Psoas muscle (tissue), 8 donors: ENCODE measurements at regions of chr5 and their contacts with region 1.

Region 1: GRCh38 chr5:116574367-116575325 is at the start of gene SEMA6A:
- DNase-seq: peak; percentile 88 to 94
- ATAC-seq: peak; percentile 89 to 92 (median 90)
- H3K4me3 ChIP-seq: peak within 1 kb of the TSS; percentile 73
- H3K27ac ChIP-seq: peak within 1 kb of the TSS; percentile 63
- H3K4me1 ChIP-seq: peaks cover 11% of the 10 kb centered on the region
- H3K27me3 ChIP-seq: peaks cover 0 to 31% (median 14%) of the 10 kb centered on the region in 3 donors
- CTCF ChIP-seq: no peak
- total RNA-seq, gene SEMA6A: 3.1 to 7.6 (median 4.3) TPM

Region 2: DNA sequence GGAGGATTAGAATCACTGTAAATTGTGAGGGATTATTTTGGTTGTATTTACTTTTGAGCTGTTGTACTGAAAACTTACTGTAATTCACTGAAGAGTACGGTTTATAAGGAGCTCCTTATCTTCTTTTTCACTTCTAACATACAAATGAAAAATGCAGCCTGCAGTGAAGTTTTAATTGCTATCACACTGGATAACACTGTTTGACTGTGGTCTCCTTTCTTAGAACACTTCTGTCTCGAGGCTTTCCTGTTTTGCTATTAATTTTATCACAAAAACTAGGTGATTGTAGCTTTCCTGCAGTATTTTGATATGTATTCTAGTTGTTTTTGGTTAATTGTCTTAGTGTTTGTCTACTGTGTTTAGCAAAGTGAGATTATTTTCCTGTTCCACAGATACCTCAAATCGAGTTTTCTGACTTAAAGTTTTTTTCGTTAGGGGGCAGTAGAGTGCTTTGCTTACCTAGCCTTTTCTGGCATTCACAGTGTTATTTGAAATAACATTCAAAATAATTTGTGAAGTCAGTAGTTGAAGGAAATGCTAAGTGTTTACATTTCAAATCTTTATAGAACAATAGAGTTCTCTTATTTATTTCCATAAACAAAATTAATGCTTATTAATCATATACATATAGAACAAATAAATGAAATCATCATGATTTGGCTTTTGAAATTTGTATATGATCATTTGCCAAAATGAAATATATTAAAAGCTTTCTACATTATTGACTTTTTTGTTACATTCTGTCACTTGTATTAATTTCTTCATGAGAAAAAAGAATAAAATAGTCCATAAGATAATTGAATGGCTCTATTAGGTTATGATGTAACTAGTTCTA is 436.9 kb before region 1 on chr5:
- intact Hi-C with region 1: loop called in 1 of 2 experiments (anchors 10 kb)
- DNase-seq: no peak
- ATAC-seq: peak in 2 of 4 donors; percentile 37 to 72
- H3K4me3 ChIP-seq: no peak overlapping the region
- H3K27ac ChIP-seq: no peak overlapping the region
- H3K4me1 ChIP-seq: peaks cover 7% of the 10 kb centered on the region
- H3K27me3 ChIP-seq: no peaks in the 10 kb centered on the region
- CTCF ChIP-seq: peak; percentile 84

Region 3: GRCh38 chr5:116374434-116374852 is 200.2 kb before region 1 on chr5:
- intact Hi-C with region 1: no loop called
- DNase-seq: no peak
- ATAC-seq: no peak
- H3K4me3 ChIP-seq: no peak overlapping the region
- H3K27ac ChIP-seq: no peak overlapping the region
- H3K4me1 ChIP-seq: peaks cover 78% of the 10 kb centered on the region
- H3K27me3 ChIP-seq: no peaks in the 10 kb centered on the region
- CTCF ChIP-seq: no peak

Region 4: GRCh38 chr5:116605310-116606070 is 30.8 kb after region 1 on chr5:
- intact Hi-C with region 1: no loop called
- DNase-seq: no peak
- ATAC-seq: no peak
- H3K4me3 ChIP-seq: no peak overlapping the region
- H3K27ac ChIP-seq: no peak overlapping the region
- H3K4me1 ChIP-seq: no peaks in the 10 kb centered on the region
- H3K27me3 ChIP-seq: no peaks in the 10 kb centered on the region
- CTCF ChIP-seq: no peak

Region 5: DNA sequence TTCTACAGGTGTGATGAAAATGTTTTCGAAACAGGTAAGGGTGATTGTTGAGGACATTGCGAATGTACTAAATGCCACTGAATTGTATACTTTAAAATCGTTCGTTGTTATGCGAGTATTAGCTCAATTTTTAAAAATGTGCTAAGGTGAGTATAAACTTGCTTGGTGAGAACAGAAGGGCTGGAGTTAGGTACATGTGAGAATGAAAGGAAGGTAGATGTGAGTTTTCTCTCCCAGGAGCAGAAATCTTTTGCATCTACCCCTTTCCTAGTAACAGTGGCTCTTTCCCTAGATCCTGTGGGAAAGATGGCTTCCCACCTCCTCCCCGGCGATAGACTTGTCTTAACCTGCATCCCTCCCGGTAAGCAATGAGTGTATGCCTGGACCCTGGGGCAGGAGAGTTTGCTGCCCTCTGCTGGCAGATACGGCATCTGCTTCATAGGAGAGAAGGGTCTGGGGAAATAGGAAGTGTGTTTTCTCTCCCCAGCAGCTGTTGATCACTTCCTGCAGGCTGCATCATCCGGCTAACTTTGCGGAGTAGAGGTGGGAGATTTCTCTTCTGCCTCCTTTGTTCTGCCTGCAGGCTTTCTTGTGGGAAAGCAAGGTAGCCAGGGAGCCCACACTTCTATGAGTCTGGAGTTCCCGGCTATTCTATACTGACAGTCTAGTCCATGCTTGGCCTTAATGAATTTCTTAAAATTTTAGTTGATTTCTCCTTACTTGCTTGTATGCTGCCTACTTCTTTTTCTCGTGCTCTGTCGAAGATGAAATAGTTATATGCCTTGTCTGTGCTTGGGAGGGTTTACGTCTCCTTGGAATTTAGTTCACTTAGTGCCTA is 373.3 kb after region 1 on chr5:
- intact Hi-C with region 1: loop called in 1 of 2 experiments (anchors 2 kb)
- DNase-seq: peak; percentile 37 to 54
- ATAC-seq: peak; percentile 54 to 71 (median 61)
- H3K4me3 ChIP-seq: no peak overlapping the region
- H3K27ac ChIP-seq: no peak overlapping the region
- H3K4me1 ChIP-seq: no peaks in the 10 kb centered on the region
- H3K27me3 ChIP-seq: peaks cover 0 to 2% (median 0%) of the 10 kb centered on the region in 3 donors
- CTCF ChIP-seq: peak; percentile 47